ENCODE measurements at regions of chr7 and their contacts with region 1.

Region 1: GRCh38 chr7:108280136-108280535 is 150.0 kb upstream of the LAMB4 start:
- DNase-seq: peak; percentile 64
- H3K4me3 ChIP-seq: no peak overlapping the region
- H3K27ac ChIP-seq: peak overlapping the region; percentile 10
- H3K4me1 ChIP-seq: peaks cover 55% of the 10 kb centered on the region
- H3K27me3 ChIP-seq: no peaks in the 10 kb centered on the region
- CTCF ChIP-seq: no peak
- POLR2A ChIP-seq: no peak

Region 2: GRCh38 chr7:108079648-108080591 is 200.2 kb before region 1 on chr7:
- CTCF ChIA-PET with region 1: no interaction called
- POLR2A ChIA-PET with region 1: no interaction called
- dilution Hi-C with region 1: no loop called
- intact Hi-C with region 1: no loop called
- DNase-seq: peak; percentile 87
- H3K4me3 ChIP-seq: peak overlapping the region in 1 of 3 experiments; percentile 13
- H3K27ac ChIP-seq: peak overlapping the region; percentile 92
- H3K4me1 ChIP-seq: peaks cover 40% of the 10 kb centered on the region
- H3K27me3 ChIP-seq: no peaks in the 10 kb centered on the region
- CTCF ChIP-seq: no peak
- POLR2A ChIP-seq: peak; percentile 54

Region 3: DNA sequence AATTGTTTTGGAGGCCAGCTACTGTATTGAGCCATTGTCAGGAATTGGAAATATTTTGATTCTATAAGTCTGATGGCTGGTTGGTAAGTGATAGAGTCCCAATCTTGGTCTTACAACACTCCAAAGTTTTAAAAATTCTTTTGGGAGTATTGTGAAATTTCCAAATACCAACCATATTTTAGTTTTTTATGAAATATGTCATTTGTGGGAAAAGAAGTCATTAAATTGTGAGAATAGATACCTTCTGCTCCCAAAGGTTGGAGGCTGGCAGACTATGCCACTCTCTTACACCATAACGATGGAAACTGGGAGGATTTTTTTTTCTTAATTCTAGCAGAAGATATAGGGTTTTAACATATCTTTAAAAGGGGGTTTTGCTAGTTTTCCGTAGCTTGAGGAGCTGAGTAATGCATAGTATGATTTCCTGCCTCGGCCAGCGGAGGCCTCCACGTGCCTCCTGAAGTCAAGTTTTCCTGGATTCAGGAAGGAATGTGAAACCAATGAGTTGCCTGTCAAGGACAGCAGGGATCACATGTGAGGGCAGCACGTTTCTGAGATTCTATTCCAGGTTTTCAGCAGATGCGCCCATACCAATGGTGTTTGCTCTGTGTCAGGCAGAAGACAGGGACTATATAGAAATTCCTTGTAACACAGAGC is 57.8 kb before region 1 on chr7:
- CTCF ChIA-PET with region 1: interaction called, 19 read pairs
- POLR2A ChIA-PET with region 1: no interaction called
- dilution Hi-C with region 1: no loop called
- intact Hi-C with region 1: no loop called
- DNase-seq: peak; percentile 83
- H3K4me3 ChIP-seq: no peak overlapping the region
- H3K27ac ChIP-seq: peak overlapping the region; percentile 57
- H3K4me1 ChIP-seq: peaks cover 13% of the 10 kb centered on the region
- H3K27me3 ChIP-seq: no peaks in the 10 kb centered on the region
- CTCF ChIP-seq: no peak
- POLR2A ChIP-seq: no peak

Region 4: DNA sequence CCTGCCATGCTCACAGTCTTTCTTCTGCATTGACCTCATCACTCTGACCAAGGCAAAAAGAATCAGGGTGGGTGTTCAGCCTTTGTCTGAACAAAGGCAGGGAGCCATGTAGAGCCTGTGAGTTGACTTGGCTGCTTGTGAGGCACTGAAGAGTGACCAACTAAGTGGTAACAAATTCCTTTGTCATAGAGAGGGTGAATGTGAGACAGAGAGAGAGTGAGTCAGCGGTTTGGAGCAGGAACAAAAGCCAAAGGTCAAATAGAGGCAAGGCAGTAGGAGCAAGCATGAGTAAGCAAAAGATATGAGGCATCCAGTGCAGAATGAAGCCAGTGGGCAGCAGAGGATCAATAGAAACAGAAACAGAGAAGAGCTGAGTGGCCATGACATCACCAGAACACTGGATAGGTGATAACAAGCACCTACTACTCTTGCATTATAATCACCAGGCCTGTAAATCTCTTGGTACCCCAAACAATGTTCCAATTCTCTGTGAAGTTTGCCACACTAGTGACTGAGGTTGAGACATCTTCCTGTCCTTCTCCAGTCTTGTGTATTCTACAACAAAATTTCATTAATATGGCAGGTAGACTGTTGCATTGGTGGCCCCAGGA is 33.8 kb before region 1 on chr7:
- CTCF ChIA-PET with region 1: interaction called, 4 read pairs
- POLR2A ChIA-PET with region 1: interaction called, 5 read pairs
- dilution Hi-C with region 1: no loop called
- intact Hi-C with region 1: loop called (anchors 2 kb)
- DNase-seq: peak; percentile 91
- H3K4me3 ChIP-seq: no peak overlapping the region
- H3K27ac ChIP-seq: peak overlapping the region; percentile 79
- H3K4me1 ChIP-seq: peaks cover 30% of the 10 kb centered on the region
- H3K27me3 ChIP-seq: no peaks in the 10 kb centered on the region
- CTCF ChIP-seq: no peak
- POLR2A ChIP-seq: peak; percentile 57

Region 5: GRCh38 chr7:108266491-108266890 is 13.6 kb before region 1 on chr7:
- CTCF ChIA-PET with region 1: interaction called, 17 read pairs
- POLR2A ChIA-PET with region 1: no interaction called
- dilution Hi-C with region 1: no loop called
- intact Hi-C with region 1: no loop called
- DNase-seq: no peak
- H3K4me3 ChIP-seq: no peak overlapping the region
- H3K27ac ChIP-seq: no peak overlapping the region
- H3K4me1 ChIP-seq: no peaks in the 10 kb centered on the region
- H3K27me3 ChIP-seq: no peaks in the 10 kb centered on the region
- CTCF ChIP-seq: no peak
- POLR2A ChIP-seq: no peak

Region 6: DNA sequence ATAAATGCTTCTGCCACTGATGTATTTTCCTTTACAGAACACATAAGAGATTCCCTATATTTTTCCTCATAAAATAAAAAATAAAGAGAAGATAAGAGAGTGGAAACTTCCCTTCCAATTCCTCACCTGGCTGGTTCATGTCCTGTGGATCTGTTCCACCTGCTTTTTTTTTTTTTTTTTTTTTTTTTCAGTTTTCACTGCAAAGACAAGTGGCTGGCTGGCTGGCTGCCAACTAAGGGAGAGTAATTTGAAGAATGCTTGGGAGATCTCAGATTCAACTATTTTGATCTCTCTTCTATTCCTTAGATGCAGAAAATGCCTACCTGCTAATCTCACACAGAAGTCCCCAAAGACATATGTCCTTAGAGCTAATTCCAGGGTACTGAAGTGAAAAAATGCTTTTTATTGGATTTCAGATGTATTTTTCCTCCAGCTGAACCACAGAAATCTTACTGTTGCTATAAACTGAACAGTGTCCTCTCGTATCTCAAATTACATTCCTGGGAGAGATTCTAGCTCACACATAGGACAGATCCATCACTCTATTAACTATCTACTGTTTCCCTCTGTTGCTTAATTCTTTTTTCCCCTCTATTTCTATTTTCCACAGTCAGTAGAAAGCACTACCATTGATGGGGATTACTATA is 55.3 kb after region 1 on chr7:
- CTCF ChIA-PET with region 1: no interaction called
- POLR2A ChIA-PET with region 1: no interaction called
- dilution Hi-C with region 1: no loop called
- intact Hi-C with region 1: no loop called
- DNase-seq: peak; percentile 19
- H3K4me3 ChIP-seq: no peak overlapping the region
- H3K27ac ChIP-seq: no peak overlapping the region
- H3K4me1 ChIP-seq: no peaks in the 10 kb centered on the region
- H3K27me3 ChIP-seq: no peaks in the 10 kb centered on the region
- CTCF ChIP-seq: no peak
- POLR2A ChIP-seq: no peak

Region 7: GRCh38 chr7:108358358-108358952 is 78.3 kb after region 1 on chr7:
- CTCF ChIA-PET with region 1: no interaction called
- POLR2A ChIA-PET with region 1: no interaction called
- dilution Hi-C with region 1: no loop called
- intact Hi-C with region 1: no loop called
- DNase-seq: no peak
- H3K4me3 ChIP-seq: no peak overlapping the region
- H3K27ac ChIP-seq: no peak overlapping the region
- H3K4me1 ChIP-seq: no peaks in the 10 kb centered on the region
- H3K27me3 ChIP-seq: no peaks in the 10 kb centered on the region
- CTCF ChIP-seq: no peak
- POLR2A ChIP-seq: no peak

Region 8: GRCh38 chr7:108736221-108736891 is 456.2 kb after region 1 on chr7:
- CTCF ChIA-PET with region 1: no interaction called
- POLR2A ChIA-PET with region 1: no interaction called
- dilution Hi-C with region 1: no loop called
- intact Hi-C with region 1: no loop called
- DNase-seq: no peak
- H3K4me3 ChIP-seq: no peak overlapping the region
- H3K27ac ChIP-seq: no peak overlapping the region
- H3K4me1 ChIP-seq: no peaks in the 10 kb centered on the region
- H3K27me3 ChIP-seq: peaks cover 0 to 9% of the 10 kb centered on the region in 2 experiments
- CTCF ChIP-seq: no peak
- POLR2A ChIP-seq: no peak